Dendritic cell treated with granulocyte-macrophage colony-stimulating factor and Interleukin-4, amounts not matched to agents 40 ng/mL and 50 ng/mL, for 4 days (primary cell): ENCODE measurements at regions of chr7 and their contacts with region 1.

Region 1: DNA sequence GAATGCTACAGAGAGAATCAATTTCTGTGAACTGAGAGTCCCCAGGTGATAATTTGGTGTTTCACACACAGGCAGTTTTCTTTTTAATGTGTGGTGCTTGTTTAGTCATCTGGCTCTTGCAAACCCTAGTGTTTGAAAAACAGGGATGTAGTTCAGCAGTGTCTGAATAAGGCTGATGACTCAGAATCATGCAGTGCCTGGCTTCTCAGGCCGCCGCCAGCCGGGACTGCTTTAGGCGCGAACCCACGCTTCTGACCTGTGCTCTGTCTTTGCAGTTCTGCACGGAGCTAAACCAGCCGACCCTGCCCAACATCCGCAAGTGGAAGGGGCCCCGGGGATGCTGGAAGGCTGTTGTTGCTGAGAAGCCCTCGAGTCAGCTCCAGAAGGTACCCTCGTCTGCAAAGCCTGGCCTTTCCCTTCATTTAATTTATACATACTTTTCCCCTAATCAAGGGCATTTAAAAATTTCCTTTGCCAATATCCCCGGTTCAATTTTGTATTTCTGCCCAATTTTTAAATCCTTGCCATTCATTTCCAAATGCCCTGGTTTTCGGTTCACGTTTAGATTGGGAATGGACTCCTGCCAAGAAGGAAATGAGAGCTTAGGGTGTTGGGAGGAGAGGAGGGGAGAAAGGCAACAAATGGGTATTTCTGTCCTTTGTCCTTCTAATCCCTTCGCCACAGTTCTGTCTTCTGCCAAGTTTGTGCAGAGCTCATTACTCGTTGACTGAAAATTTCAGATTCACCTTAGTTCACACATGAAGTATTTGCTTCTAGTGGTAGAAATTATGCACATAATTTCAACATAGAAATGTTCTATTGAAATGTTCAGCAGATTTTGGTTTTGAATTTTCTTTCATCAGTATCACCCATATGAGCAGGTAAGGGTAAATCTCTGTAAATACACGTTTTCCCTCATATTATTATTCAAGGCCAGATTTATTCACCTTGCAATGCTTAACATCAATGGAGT is 108.5 kb upstream of the ANLN start:
- H3K4me3 Mint-ChIP-seq: peak overlapping the region; percentile 61
- H3K27ac Mint-ChIP-seq: peak overlapping the region; percentile 33
- H3K4me1 Mint-ChIP-seq: peaks cover 80% of the 10 kb centered on the region
- H3K27me3 Mint-ChIP-seq: no peaks in the 10 kb centered on the region

Region 2: DNA sequence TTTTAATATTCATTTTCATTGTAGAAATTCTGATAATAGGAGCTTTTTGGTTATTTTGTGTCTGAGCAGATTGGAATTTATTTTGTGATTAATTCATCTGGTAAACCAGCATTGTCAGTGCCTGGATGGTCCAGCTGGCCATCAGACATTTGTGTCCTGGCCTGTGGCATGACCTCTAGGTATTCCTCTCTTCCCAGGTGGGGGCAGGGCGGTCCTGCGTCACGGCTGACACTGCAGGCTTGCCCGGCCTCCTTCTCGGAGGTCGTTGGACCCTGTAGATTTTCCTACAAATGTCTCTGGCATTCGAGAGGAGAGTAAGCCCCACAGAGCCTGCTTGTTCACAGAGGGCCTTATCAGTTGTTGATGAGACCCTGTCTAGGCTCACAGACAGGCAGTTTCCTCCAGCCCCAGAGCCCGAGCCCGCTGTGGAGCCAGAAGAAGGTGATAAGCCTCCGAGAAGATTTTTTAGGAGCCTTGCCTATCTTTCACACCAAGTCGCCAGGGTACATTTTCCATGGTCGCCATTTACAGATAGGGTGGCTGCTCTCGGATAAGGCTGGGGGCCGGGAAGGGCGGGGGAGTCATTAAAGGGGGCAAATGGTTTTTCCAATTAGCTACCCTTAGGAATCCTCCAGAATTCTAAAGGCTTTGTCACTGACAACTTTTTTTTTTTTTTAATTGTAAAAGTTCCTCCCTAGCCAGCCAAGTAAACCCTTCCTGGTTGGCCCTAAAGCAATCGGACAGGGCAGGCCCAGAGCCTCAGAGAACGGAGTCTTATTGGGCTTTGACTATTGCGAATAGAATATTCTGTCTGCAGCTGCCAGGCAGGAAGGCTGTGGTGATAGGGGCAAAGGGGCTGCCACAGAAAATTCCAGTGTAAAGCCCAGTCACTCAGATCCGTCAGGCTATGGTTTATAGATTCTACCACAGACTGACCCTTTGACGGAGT is 949.1 kb before region 1 on chr7:
- intact Hi-C with region 1: no loop called
- H3K4me3 Mint-ChIP-seq: no peak overlapping the region
- H3K27ac Mint-ChIP-seq: no peak overlapping the region
- H3K4me1 Mint-ChIP-seq: no peaks in the 10 kb centered on the region
- H3K27me3 Mint-ChIP-seq: peaks cover under 1% of the 10 kb centered on the region

Region 3: GRCh38 chr7:36115448-36116321 is 165.4 kb before region 1 on chr7:
- intact Hi-C with region 1: loop called (anchors 5 kb)
- H3K4me3 Mint-ChIP-seq: no peak overlapping the region
- H3K27ac Mint-ChIP-seq: peak overlapping the region; percentile 42
- H3K4me1 Mint-ChIP-seq: peaks cover 58% of the 10 kb centered on the region
- H3K27me3 Mint-ChIP-seq: peaks cover 10% of the 10 kb centered on the region

Region 4: DNA sequence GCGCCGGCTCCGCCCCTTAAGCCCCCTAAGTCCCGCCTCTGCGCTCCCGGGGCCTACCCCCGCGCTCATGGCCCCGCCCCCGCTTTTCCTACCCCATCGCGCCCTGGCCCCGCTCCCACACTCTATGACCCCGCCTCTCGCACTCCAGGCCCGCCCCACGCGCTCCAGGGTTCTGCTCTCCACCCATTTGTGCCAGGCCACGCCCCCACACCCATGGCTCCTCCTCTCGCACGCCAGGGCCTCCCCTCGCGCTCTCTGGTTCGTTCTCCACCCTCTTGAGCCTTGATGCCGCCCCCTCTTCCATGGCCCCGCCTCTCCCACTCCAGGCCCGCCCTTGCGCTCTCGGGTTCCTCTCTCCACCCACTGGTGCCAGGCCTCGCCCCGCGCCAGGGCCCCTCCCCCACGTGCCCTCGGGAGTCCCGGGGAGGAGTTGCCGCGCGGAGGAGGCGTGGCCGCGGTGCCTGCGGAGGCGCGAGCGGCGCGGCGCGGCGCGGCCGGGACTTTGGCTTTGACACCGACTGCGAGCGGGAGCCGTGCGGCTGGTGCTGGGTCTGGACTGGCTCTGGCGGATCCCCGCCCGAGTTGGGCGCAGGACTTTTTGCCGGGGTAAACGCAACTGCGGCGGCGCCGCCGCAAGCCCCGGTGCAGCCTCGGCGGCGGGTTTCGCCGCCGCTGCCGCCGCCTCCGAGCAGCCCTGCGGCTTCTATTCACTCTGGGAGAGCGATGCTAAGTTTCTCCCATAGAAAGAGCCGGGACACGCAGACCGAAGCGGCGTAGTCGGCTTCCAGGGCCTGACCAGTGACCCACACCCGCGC is 128.2 kb before region 1 on chr7 and contains the start of gene EEPD1:
- intact Hi-C with region 1: loop called (anchors 10 kb)
- H3K4me3 Mint-ChIP-seq: peak within 1 kb of the TSS; percentile 88
- H3K27ac Mint-ChIP-seq: peak within 1 kb of the TSS; percentile 89
- H3K4me1 Mint-ChIP-seq: peaks cover 71% of the 10 kb centered on the region
- H3K27me3 Mint-ChIP-seq: no peaks in the 10 kb centered on the region

Region 5: GRCh38 chr7:36192053-36192824 is 88.9 kb before region 1 on chr7:
- intact Hi-C with region 1: loop called (anchors 5 kb)
- H3K4me3 Mint-ChIP-seq: no peak overlapping the region
- H3K27ac Mint-ChIP-seq: peak overlapping the region; percentile 81
- H3K4me1 Mint-ChIP-seq: peaks cover 72% of the 10 kb centered on the region
- H3K27me3 Mint-ChIP-seq: peaks cover 3% of the 10 kb centered on the region

Region 6: GRCh38 chr7:36216063-36216684 is 65.0 kb before region 1 on chr7:
- intact Hi-C with region 1: loop called (anchors 2 kb)
- H3K4me3 Mint-ChIP-seq: no peak overlapping the region
- H3K27ac Mint-ChIP-seq: peak overlapping the region; percentile 78
- H3K4me1 Mint-ChIP-seq: peaks cover 63% of the 10 kb centered on the region
- H3K27me3 Mint-ChIP-seq: no peaks in the 10 kb centered on the region

Region 7: GRCh38 chr7:36227223-36227622 is 53.9 kb before region 1 on chr7:
- intact Hi-C with region 1: no loop called
- H3K4me3 Mint-ChIP-seq: no peak overlapping the region
- H3K27ac Mint-ChIP-seq: no peak overlapping the region
- H3K4me1 Mint-ChIP-seq: peaks cover 36% of the 10 kb centered on the region
- H3K27me3 Mint-ChIP-seq: no peaks in the 10 kb centered on the region

Region 8: GRCh38 chr7:36244429-36244828 is 36.7 kb before region 1 on chr7:
- intact Hi-C with region 1: no loop called
- H3K4me3 Mint-ChIP-seq: no peak overlapping the region
- H3K27ac Mint-ChIP-seq: no peak overlapping the region
- H3K4me1 Mint-ChIP-seq: peaks cover 18% of the 10 kb centered on the region
- H3K27me3 Mint-ChIP-seq: no peaks in the 10 kb centered on the region

Region 9: DNA sequence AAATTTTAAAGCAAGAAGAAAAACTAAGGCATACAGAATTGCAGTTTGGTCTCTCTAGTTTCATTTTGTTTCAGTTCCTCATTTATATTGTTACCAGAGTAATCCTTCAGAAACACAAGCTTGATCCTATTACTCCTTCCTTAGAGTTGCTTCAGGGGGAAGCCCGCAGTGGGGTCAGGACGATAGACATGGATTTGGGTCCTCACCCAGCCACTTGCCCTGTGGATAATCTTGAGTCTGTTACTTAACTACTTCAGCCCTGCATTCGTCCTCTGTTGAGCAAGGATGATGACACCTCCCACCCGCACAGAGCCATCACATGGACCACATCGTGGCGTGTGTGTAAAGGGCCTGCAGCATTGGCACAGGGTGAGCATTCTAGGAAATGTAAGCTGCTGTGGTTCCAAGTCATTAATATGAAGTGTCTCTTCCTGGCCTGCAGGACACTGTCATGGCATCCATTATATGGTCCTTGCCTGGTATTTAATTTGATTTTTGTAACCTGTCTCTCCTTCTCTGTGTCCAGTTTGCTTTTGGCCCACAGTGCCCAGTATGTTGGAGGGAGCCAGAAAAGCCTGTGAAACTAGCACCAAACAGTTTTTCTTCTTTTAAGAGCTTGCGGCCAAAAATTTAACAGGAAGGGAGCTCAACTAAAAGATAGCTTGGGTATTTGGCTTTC is 16.9 kb before region 1 on chr7:
- intact Hi-C with region 1: loop called (anchors 2 kb)
- H3K4me3 Mint-ChIP-seq: no peak overlapping the region
- H3K27ac Mint-ChIP-seq: peak overlapping the region; percentile 85
- H3K4me1 Mint-ChIP-seq: peaks cover 68% of the 10 kb centered on the region
- H3K27me3 Mint-ChIP-seq: no peaks in the 10 kb centered on the region